ENCODE measurements at regions of chr12 and their contacts with region 1.

Region 1: DNA sequence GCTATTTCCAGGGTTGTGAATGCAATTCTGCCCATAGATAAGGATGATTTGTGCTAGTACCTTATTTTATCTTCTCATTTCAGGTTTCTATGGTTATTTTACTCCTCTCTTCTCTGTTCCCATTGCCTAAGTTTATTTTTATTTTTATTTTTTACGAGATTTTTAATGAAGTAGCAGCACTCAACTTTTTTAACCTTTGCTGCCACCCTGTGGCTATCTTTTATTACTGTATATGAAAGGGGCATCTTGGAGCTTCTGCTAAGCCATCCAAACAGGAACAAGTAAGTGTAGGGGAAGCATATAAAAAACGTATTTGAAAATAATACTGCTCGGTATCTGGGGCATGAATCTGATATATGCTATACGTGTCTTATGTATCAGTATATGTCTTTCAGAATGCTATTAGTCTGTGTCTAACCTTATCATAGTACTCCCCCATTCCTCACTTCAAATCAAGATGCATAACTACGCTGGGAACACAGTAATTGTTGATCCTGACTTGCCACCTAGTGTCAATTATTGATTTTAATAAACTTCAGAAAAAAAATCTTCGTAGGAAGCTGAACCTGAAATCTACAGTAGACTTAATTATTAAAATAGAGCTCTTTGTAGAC is 60.3 kb downstream of the KLRG1 start:
- DNase-seq: peak; percentile 37
- ATAC-seq: peak; percentile 76
- H3K4me3 Mint-ChIP-seq: no peak overlapping the region
- H3K27ac Mint-ChIP-seq: no peak overlapping the region
- H3K4me1 Mint-ChIP-seq: peaks cover 13% of the 10 kb centered on the region
- H3K27me3 Mint-ChIP-seq: no peaks in the 10 kb centered on the region

Region 2: DNA sequence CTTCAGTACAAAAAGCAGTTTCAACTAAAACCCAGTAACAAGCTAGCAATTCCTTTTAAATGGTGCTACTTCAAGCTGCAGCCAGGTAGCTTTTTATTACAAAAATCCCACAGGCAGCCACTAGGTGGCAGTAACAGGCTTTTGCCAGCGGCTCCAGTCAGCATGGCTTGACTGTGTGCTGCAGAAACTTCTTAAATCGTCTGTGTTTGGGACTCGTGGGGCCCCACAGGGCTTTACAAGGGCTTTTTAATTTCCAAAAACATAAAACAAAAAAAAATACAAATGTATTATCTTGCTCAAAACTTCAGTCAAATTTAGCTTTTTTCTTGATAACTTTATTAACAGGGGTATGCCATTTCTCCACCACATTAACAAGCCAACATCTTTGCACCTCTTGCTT is 505.3 kb before region 1 on chr12:
- CTCF ChIA-PET with region 1: interaction called, 13 read pairs
- POLR2A ChIA-PET with region 1: no interaction called
- intact Hi-C with region 1: loop called (anchors 2 to 10 kb)
- DNase-seq: peak; percentile 83
- ATAC-seq: peak; percentile 73
- H3K4me3 Mint-ChIP-seq: no peak overlapping the region
- H3K27ac Mint-ChIP-seq: no peak overlapping the region
- H3K4me1 Mint-ChIP-seq: peaks cover 3% of the 10 kb centered on the region
- H3K27me3 Mint-ChIP-seq: peaks cover 22% of the 10 kb centered on the region

Region 3: DNA sequence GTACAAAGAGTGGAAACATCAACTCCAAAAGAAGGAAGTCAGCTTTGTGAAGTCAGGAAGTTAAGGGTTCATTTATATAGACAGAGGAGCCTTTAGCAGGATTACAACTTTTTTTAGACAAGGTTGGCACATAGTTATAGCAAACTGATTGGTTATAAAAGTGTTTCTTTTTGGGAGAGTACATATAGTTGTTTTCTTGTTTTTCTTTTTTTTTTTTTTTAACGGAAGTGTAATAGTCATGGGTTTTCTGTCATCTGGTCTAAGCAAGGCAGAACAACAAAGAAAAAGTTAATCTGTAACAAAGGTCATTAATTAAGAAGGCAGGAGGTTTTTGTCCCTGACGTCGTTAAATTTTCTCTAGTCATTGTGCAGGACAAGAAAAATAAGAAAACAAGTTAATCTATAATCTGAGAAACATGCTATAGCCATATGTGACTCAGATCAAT is 374.0 kb before region 1 on chr12:
- CTCF ChIA-PET with region 1: interaction called, 15 read pairs
- POLR2A ChIA-PET with region 1: interaction called, 7 read pairs
- intact Hi-C with region 1: no loop called
- DNase-seq: no peak
- ATAC-seq: no peak
- H3K4me3 Mint-ChIP-seq: no peak overlapping the region
- H3K27ac Mint-ChIP-seq: no peak overlapping the region
- H3K4me1 Mint-ChIP-seq: peaks cover 6% of the 10 kb centered on the region
- H3K27me3 Mint-ChIP-seq: no peaks in the 10 kb centered on the region

Region 4: GRCh38 chr12:8860165-8860961 is 189.3 kb before region 1 on chr12:
- CTCF ChIA-PET with region 1: interaction called, 13 read pairs
- POLR2A ChIA-PET with region 1: no interaction called
- intact Hi-C with region 1: no loop called
- DNase-seq: peak; percentile 51
- ATAC-seq: peak; percentile 71
- H3K4me3 Mint-ChIP-seq: no peak overlapping the region
- H3K27ac Mint-ChIP-seq: no peak overlapping the region
- H3K4me1 Mint-ChIP-seq: no peaks in the 10 kb centered on the region
- H3K27me3 Mint-ChIP-seq: no peaks in the 10 kb centered on the region

Region 5: GRCh38 chr12:8949342-8950220 is 100.0 kb before region 1 on chr12 and contains the start of gene M6PR:
- CTCF ChIA-PET with region 1: interaction called, 117 read pairs
- POLR2A ChIA-PET with region 1: interaction called, 5 read pairs
- intact Hi-C with region 1: loop called in 1 of 2 experiments (anchors 1 kb)
- DNase-seq: peak; percentile 96
- ATAC-seq: peak; percentile 85
- H3K4me3 Mint-ChIP-seq: peak within 1 kb of the TSS; percentile 89
- H3K27ac Mint-ChIP-seq: peak within 1 kb of the TSS; percentile 97
- H3K4me1 Mint-ChIP-seq: peaks cover 57% of the 10 kb centered on the region
- H3K27me3 Mint-ChIP-seq: no peaks in the 10 kb centered on the region
- total RNA-seq, gene M6PR: 146 to 179 TPM

Region 6: DNA sequence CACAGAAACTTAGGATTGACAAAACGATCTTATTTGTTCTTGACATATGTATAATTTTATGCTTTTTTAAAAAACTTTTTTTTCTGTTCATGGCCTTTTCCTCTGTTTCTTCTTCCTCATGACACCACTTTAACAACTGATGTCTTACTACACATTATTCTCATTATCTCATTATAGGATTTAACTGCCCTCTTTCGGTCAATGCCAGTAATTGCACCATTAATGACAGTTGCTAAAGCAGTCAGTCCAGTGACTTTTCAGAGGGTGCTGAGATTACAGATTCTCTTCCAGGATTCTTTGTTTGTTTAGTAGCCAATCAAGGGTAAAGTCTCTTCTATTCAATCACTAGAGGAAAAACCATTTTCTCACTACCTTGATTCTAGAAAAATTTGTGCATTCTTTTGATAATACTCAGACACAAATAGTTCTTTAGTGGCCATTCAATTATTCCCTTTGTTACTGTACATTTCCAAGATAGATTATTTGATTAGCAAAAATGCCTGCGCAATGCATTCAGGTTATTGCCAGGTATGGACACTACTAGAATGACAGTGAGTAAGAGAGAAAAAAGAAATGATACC is 10.1 kb before region 1 on chr12:
- CTCF ChIA-PET with region 1: interaction called, 55 read pairs
- POLR2A ChIA-PET with region 1: no interaction called
- intact Hi-C with region 1: no loop called
- DNase-seq: no peak
- ATAC-seq: peak; percentile 78
- H3K4me3 Mint-ChIP-seq: no peak overlapping the region
- H3K27ac Mint-ChIP-seq: no peak overlapping the region
- H3K4me1 Mint-ChIP-seq: peaks cover 48% of the 10 kb centered on the region
- H3K27me3 Mint-ChIP-seq: no peaks in the 10 kb centered on the region

Measured in activated CD4-positive, alpha-beta T cell treated with anti-CD3 and anti-CD28 coated beads for 36 hours (primary cell).